WTC11 (cell line): ENCODE measurements at regions of chr17 and their contacts with region 1.

Region 1: GRCh38 chr17:7687908-7688807 is at the start of gene WRAP53:
- DNase-seq: peak; percentile 98
- ATAC-seq: peak; percentile 89
- H3K4me3 Mint-ChIP-seq: peak within 1 kb of the TSS; percentile 88
- H3K27ac Mint-ChIP-seq: peak within 1 kb of the TSS; percentile 100
- H3K4me1 Mint-ChIP-seq: peaks cover 27% of the 10 kb centered on the region
- H3K27me3 Mint-ChIP-seq: no peaks in the 10 kb centered on the region
- CTCF ChIP-seq: peak; percentile 94
- total RNA-seq, gene WRAP53: 35.5 to 37.3 TPM (median 37.2 TPM) in 3 replicates

Region 2: DNA sequence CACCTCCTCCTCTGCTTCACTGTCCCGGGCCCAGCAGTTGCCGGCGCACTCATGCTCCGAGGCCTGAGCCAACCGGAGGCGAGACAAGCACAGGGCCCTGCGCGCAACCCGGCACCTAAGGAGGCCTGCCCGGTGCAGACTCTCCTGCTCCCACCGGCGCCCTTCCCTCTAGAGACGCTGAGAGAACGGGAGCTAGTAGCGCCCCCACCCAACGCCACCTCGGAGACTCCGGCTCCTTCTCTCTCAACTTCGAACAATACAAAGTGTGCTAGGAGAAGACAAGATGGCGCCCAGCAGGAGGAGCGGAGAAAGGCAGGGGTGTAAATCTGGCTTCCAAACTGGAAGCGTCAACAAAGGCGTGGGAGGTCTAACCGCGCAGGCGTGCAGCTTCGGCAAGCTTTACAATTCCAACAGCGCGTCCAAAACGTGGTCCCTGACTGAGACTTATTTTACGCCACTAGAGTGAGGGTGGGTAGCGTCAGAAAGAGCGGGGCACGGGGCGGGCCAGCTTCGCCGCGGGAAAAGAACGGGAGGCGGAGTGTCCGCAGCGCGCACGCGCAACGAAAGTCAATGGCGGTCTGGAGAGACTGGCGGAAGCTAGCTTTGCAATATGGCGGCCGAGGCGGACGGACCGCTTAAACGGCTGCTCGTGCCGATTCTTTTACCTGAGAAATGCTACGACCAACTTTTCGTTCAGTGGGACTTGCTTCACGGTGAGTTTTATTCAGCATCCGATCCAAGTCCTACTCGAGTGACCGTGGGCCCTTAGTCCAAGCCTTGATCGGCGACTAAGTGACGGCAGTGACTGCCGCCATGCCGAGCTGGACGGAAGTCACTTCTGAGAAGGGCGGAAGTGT is 104.7 kb before region 1 on chr17 and contains the start of gene MPDU1:
- CTCF ChIA-PET with region 1: interaction called, 43 read pairs
- POLR2A ChIA-PET with region 1: interaction called, 41 read pairs
- DNase-seq: peak; percentile 96
- ATAC-seq: peak; percentile 26
- H3K4me3 Mint-ChIP-seq: peak within 1 kb of the TSS; percentile 97
- H3K27ac Mint-ChIP-seq: peak within 1 kb of the TSS; percentile 100
- H3K4me1 Mint-ChIP-seq: peaks cover 48% of the 10 kb centered on the region
- H3K27me3 Mint-ChIP-seq: no peaks in the 10 kb centered on the region
- CTCF ChIP-seq: no peak
- total RNA-seq, gene MPDU1: 55.3 to 57.7 TPM (median 57.0 TPM) in 3 replicates

Region 3: DNA sequence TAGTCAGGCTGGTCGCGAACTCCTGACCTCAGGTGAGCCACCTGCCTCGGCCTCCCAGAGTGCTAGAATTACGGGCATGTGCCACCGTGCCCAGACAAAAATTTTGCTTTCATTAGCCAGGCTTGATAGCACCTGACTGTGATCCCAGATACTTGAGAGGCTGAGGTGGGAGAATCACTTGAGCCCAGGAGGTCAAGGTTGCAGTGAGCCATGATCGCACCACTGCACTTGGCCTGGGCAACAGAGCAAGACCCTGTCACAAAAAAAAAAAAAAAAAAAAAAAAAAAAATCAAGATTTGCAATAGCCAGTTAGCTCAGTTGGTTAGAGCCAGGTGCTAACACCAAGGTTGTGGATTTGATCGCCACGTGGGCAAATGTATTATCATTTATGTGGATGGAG is 67.3 kb before region 1 on chr17:
- CTCF ChIA-PET with region 1: interaction called, 47 read pairs
- POLR2A ChIA-PET with region 1: interaction called, 11 read pairs
- DNase-seq: no peak
- ATAC-seq: no peak
- H3K4me3 Mint-ChIP-seq: no peak overlapping the region
- H3K27ac Mint-ChIP-seq: no peak overlapping the region
- H3K4me1 Mint-ChIP-seq: no peaks in the 10 kb centered on the region
- H3K27me3 Mint-ChIP-seq: no peaks in the 10 kb centered on the region
- CTCF ChIP-seq: no peak

Region 4: DNA sequence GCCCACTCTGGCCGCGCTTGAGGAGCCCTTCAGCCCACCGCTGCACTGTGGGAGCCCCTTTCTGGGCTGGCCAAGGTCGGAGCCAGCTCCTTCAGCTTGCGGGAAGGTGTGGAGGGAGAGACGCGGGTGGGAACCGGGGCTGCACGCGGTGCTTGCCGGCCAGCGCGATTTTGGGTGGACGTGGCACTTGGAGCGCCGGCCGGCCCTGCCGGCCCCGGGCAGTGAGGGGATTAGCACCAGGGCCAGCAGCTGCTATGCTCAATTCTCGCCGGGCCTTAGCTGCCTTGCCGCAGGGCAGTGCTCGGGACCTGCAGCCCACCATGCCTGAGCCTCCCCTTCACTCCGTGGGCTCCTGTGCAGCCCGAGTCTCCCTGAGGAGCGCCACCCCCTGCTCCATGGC is 47.4 kb before region 1 on chr17:
- CTCF ChIA-PET with region 1: interaction called, 205 read pairs
- POLR2A ChIA-PET with region 1: interaction called, 68 read pairs
- DNase-seq: no peak
- ATAC-seq: no peak
- H3K4me3 Mint-ChIP-seq: no peak overlapping the region
- H3K27ac Mint-ChIP-seq: no peak overlapping the region
- H3K4me1 Mint-ChIP-seq: peaks cover 10% of the 10 kb centered on the region
- H3K27me3 Mint-ChIP-seq: peaks cover 11% of the 10 kb centered on the region
- CTCF ChIP-seq: no peak

Region 5: GRCh38 chr17:7673239-7673638 is 14.9 kb before region 1 on chr17:
- CTCF ChIA-PET with region 1: interaction called, 43 read pairs
- POLR2A ChIA-PET with region 1: interaction called, 29 read pairs
- DNase-seq: peak; percentile 78
- ATAC-seq: no peak
- H3K4me3 Mint-ChIP-seq: no peak overlapping the region
- H3K27ac Mint-ChIP-seq: no peak overlapping the region; the same call in 1 of the 2 replicates
- H3K4me1 Mint-ChIP-seq: peaks cover 31% of the 10 kb centered on the region
- H3K27me3 Mint-ChIP-seq: no peaks in the 10 kb centered on the region; the same call in 1 of the 2 replicates
- CTCF ChIP-seq: peak; percentile 58

Region 6: DNA sequence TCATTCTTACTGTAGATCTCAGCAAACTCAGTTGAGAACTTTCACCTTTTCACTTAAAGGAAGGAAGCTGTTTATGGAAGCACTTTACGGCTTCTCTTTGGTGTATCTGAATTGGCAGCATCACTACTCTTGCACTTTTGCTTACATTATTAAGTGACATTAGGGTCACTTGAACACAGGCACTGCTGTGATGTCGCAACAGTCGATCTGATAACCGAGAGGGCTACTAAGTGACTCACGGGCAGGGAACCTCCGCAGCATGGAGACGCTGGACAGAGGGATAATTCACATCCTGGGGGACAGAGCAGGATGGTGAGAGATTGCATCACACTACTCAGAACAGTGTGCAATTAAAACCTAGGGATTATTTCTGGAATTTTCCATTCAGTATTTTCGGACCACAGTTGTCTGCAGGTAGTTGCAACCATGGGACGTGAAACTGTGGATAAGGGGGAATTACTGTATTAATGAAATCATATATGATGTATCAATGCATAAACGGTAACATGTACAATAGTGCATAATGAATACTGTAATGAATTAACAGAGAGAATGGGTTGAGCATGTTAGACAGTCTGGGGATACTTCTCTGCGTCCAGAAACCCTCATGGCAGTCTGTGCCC is 86.0 kb after region 1 on chr17:
- CTCF ChIA-PET with region 1: no interaction called
- POLR2A ChIA-PET with region 1: no interaction called
- DNase-seq: no peak
- ATAC-seq: no peak
- H3K4me3 Mint-ChIP-seq: no peak overlapping the region
- H3K27ac Mint-ChIP-seq: no peak overlapping the region
- H3K4me1 Mint-ChIP-seq: no peaks in the 10 kb centered on the region
- H3K27me3 Mint-ChIP-seq: peaks cover 5% of the 10 kb centered on the region; the same call in 1 of the 2 replicates
- CTCF ChIP-seq: no peak

Region 7: GRCh38 chr17:7794075-7794663 is 106.0 kb after region 1 on chr17:
- CTCF ChIA-PET with region 1: no interaction called
- POLR2A ChIA-PET with region 1: no interaction called
- DNase-seq: no peak
- ATAC-seq: no peak
- H3K4me3 Mint-ChIP-seq: no peak overlapping the region
- H3K27ac Mint-ChIP-seq: no peak overlapping the region
- H3K4me1 Mint-ChIP-seq: peaks cover 6% of the 10 kb centered on the region; the same call in 1 of the 2 replicates
- H3K27me3 Mint-ChIP-seq: no peaks in the 10 kb centered on the region; the same call in 1 of the 2 replicates
- CTCF ChIP-seq: no peak

Region 8: GRCh38 chr17:8001976-8002720 is 314.0 kb after region 1 on chr17 and contains the start of gene GUCY2D:
- CTCF ChIA-PET with region 1: no interaction called
- POLR2A ChIA-PET with region 1: no interaction called
- DNase-seq: no peak
- ATAC-seq: no peak
- H3K4me3 Mint-ChIP-seq: peak within 1 kb of the TSS; percentile 56
- H3K27ac Mint-ChIP-seq: no peak within 1 kb of the TSS
- H3K4me1 Mint-ChIP-seq: peaks cover 14% of the 10 kb centered on the region
- H3K27me3 Mint-ChIP-seq: peaks cover 66% of the 10 kb centered on the region
- CTCF ChIP-seq: no peak
- total RNA-seq, gene GUCY2D: 0.87 to 1.9 TPM (median 1.1 TPM) in 3 replicates